ENCODE measurements at regions of chr14 and their contacts with region 1.

Region 1: DNA sequence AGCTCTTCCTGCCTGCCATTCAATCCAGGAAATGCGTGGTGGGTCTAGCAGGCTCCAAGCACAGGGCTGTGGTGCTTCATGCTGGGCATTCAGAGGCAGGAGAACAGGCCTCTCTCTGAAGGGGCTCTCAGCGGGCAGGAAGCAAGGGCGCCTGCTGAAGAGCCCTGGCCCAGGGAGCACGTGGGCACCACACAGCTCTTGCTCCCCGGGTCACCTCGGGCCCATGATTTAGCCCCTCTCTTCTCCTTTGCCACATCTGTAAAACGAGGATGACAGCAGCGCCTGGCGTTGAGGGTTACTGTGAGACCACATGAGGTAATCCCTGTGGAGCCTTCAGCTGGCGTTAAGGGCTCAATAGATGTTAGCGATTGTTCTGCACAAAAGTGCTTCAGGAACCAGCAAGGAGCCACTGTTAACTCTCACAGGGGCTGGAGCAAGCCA is 37.6 kb upstream of the SPTLC2 start:
- DNase-seq: peak; percentile 35
- ATAC-seq: no peak

Region 2: DNA sequence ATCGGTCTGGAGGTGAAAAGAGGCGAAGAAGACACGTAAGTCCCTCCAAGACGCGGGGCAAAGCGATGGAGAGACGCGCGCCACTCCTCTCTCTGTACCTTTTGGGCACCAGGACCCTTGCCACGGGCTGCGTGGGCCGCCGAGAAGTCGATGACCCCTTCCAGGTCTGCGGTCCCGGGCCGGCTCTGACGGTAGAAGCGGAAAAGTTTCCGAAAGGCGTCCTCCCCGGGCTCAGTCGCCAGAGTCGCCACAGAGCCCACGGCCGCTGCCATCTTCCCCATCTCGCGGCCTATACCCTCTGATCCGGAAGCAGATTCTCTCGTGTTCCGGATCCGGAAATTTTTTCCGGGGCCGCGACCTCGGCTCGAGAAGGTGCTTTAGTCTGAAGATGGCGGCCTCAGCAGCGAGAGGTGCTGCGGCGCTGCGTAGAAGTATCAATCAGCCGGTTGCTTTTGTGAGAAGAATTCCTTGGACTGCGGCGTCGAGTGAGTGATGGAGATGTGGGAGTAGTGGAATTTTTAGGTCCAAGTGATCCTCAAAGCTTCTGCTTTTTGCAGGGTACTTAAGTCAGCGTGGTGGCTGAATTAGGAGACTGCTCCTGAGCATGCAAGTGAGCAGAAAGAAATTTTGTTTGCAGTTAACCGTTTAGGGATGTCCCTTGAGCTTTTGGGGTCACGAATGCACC is 53.8 kb after region 1 on chr14 and contains the starts of genes ALKBH1 and SLIRP:
- intact Hi-C with region 1: loop called (anchors 2 kb)
- DNase-seq: peak; percentile 94
- ATAC-seq: peak; percentile 97
- total RNA-seq, gene ALKBH1: 12.8 TPM
- total RNA-seq, gene SLIRP: 205 TPM

Region 3: DNA sequence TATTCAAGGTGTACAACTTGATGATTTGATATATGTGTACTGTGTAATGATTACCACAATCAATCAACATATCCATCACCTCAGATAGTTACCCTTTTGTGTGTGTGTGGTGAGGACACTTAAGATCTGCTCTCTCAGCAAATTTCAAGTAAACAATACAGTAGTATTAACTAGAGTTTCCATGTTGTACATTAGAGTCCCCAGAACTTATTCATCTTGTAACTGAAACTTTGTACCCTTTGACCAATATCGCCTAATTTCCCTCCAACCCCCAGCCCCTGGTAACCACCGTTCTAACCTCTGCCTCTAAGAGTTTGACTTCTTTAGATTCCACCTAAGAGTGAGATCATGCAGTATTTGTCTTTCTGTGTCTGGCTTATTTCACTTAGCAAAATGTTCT is 158.0 kb after region 1 on chr14:
- intact Hi-C with region 1: loop called (anchors 10 kb)
- DNase-seq: no peak
- ATAC-seq: no peak